CD8-positive, alpha-beta T cell (primary cell): ENCODE measurements at regions of chr17 and their contacts with region 1.

Region 1: GRCh38 chr17:50735287-50735686 is 15.9 kb downstream of the LUC7L3 start:
- DNase-seq: no peak
- ATAC-seq: no peak
- H3K4me3 ChIP-seq: no peak overlapping the region
- H3K4me3 Mint-ChIP-seq: peak overlapping the region; percentile 10
- H3K27ac ChIP-seq: no peak overlapping the region
- H3K27ac Mint-ChIP-seq: peak overlapping the region; percentile 62
- H3K4me1 ChIP-seq: peaks cover 16% of the 10 kb centered on the region
- H3K4me1 Mint-ChIP-seq: peaks cover 65% of the 10 kb centered on the region
- H3K27me3 ChIP-seq: no peaks in the 10 kb centered on the region
- H3K27me3 Mint-ChIP-seq: no peaks in the 10 kb centered on the region
- CTCF ChIP-seq: no peak

Region 2: GRCh38 chr17:50719144-50719923 is 16.0 kb before region 1 on chr17 and contains the start of gene LUC7L3:
- CTCF ChIA-PET with region 1: interaction called, 3 read pairs
- POLR2A ChIA-PET with region 1: no interaction called
- intact Hi-C with region 1: loop called in 1 of 2 experiments (anchors 2 kb)
- DNase-seq: peak; percentile 86 to 96 (median 92)
- ATAC-seq: peak; percentile 94
- H3K4me3 ChIP-seq: peak within 1 kb of the TSS; percentile 87 to 92
- H3K4me3 Mint-ChIP-seq: peak within 1 kb of the TSS; percentile 98
- H3K27ac ChIP-seq: peak within 1 kb of the TSS; percentile 93 to 97
- H3K27ac Mint-ChIP-seq: peak within 1 kb of the TSS; percentile 99
- H3K4me1 ChIP-seq: peaks cover 31% of the 10 kb centered on the region
- H3K4me1 Mint-ChIP-seq: peaks cover 34% of the 10 kb centered on the region
- H3K27me3 ChIP-seq: no peaks in the 10 kb centered on the region
- H3K27me3 Mint-ChIP-seq: no peaks in the 10 kb centered on the region
- CTCF ChIP-seq: no peak
- total RNA-seq, gene LUC7L3: 90.0 to 96.1 TPM

Region 3: GRCh38 chr17:50963139-50963538 is 227.9 kb after region 1 on chr17:
- CTCF ChIA-PET with region 1: no interaction called
- POLR2A ChIA-PET with region 1: no interaction called
- intact Hi-C with region 1: no loop called
- DNase-seq: no peak
- ATAC-seq: no peak
- H3K4me3 ChIP-seq: no peak overlapping the region
- H3K4me3 Mint-ChIP-seq: no peak overlapping the region
- H3K27ac ChIP-seq: no peak overlapping the region
- H3K27ac Mint-ChIP-seq: no peak overlapping the region
- H3K4me1 ChIP-seq: no peaks in the 10 kb centered on the region
- H3K4me1 Mint-ChIP-seq: peaks cover 4% of the 10 kb centered on the region
- H3K27me3 ChIP-seq: no peaks in the 10 kb centered on the region
- H3K27me3 Mint-ChIP-seq: no peaks in the 10 kb centered on the region
- CTCF ChIP-seq: no peak